ENCODE measurements at regions of chr6 and their contacts with region 1.

Region 1: GRCh38 chr6:28683944-28684538 is 158.4 kb downstream of the GPX5 start:
- DNase-seq: peak in 1 of 2 experiments; percentile 42
- H3K4me3 ChIP-seq: peak overlapping the region; percentile 39; the same call in 1 of the 2 replicates
- H3K27ac ChIP-seq: no peak overlapping the region
- H3K4me1 ChIP-seq: no peaks in the 10 kb centered on the region
- H3K27me3 ChIP-seq: no peaks in the 10 kb centered on the region
- CTCF ChIP-seq: peak; percentile 87

Region 2: DNA sequence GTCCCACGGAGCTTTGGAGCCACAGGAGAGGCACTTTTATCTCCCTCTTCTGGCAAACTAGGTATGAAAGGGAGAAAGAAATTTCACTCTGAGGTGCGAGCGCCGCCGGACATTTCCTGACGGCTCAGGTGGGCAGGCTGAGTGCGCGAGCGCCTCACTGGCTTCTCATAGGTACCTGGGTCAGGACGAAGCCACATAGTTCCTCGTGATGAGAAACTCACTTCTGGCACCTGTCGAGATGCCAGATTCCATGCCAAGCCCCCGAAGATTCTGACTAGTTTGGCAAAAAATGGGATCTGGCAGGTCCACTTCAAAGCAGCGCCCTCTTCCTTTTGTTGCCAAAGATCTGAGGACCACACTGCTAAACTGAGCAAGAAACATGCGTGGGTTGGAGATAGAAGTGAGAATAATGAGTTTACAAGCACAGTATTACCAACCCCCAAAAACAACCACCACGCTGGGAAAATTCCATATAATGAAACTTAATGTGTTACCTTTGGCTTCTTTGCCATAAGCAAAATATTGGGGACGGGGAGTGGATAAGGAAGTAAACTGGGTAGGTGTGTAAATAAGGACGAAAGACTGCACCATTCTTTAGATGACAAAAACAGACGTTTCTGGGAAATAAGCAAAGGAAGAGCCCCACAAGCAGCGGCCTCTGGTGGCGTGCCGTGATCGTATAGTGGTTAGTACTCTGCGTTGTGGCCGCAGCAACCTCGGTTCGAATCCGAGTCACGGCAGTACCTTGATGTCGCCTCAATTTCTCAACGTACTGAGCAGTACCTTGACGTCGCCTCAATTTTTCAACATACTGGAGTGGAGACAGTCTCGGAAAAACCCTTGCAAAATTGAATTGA is 1526.4 kb before region 1 on chr6:
- CTCF ChIA-PET with region 1: no interaction called
- POLR2A ChIA-PET with region 1: no interaction called
- intact Hi-C with region 1: loop called (anchors 10 kb)
- DNase-seq: peak; percentile 68 to 69
- H3K4me3 ChIP-seq: peak overlapping the region; percentile 72
- H3K27ac ChIP-seq: peak overlapping the region; percentile 57
- H3K4me1 ChIP-seq: 0 out of 2 replicates have a peak, but pooled peaks cover 8% of the 10 kb centered on the region
- H3K27me3 ChIP-seq: no peaks in the 10 kb centered on the region
- CTCF ChIP-seq: peak; percentile 39; the same call in 1 of the 2 replicates

Region 3: DNA sequence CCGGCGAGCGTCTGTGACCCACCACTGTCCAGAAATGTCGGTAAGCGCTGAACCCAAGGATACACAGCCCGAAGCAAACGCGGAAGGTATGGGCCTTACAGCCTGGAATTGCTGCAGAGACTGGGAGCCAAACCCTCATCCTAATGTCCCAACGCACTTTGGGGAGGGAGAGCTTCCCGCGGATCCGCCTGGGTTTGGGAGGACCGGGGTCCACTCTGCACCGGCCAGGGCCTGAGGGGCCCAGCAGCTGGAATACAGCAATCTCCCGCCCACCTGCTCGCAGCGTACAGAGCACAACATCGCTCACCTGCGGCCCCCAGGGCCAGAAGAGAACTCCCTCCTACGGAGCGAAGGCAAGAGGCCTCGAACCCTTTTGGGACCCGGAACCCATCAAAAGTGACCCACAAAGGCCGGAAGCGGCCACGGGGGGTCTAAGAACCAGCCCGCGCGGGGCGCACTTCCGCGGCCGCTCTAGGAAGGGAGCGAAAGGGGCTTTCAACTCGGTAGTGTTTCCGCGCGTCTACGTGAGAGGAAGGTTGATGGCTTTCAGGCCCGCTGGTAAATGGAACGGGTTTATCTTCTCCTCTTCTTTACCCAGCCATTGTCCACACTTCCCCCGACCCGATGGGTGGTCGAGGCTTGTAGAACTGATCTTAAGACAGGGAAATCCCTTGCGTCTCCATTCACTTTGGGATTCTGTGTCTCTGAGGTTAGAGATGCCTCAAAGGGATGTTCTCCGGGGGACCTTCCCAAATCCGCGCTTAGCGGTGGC is 284.5 kb before region 1 on chr6 and contains the start of gene ZSCAN12:
- CTCF ChIA-PET with region 1: interaction called, 3 read pairs
- POLR2A ChIA-PET with region 1: no interaction called
- intact Hi-C with region 1: loop called (anchors 2 kb)
- DNase-seq: peak; percentile 75 to 84
- H3K4me3 ChIP-seq: peak within 1 kb of the TSS; percentile 74
- H3K27ac ChIP-seq: peak within 1 kb of the TSS; percentile 43
- H3K4me1 ChIP-seq: peaks cover 30% of the 10 kb centered on the region
- H3K27me3 ChIP-seq: no peaks in the 10 kb centered on the region
- CTCF ChIP-seq: peak; percentile 43
- total RNA-seq, gene ZSCAN12: 10.9 and 11.2 TPM in 2 replicates

Region 4: GRCh38 chr6:28742668-28743270 is 58.7 kb after region 1 on chr6:
- CTCF ChIA-PET with region 1: no interaction called
- POLR2A ChIA-PET with region 1: no interaction called
- intact Hi-C with region 1: no loop called
- DNase-seq: peak; percentile 33 to 76
- H3K4me3 ChIP-seq: peak overlapping the region; percentile 53; the same call in 1 of the 2 replicates
- H3K27ac ChIP-seq: no peak overlapping the region
- H3K4me1 ChIP-seq: peaks cover 11% of the 10 kb centered on the region; the same call in 1 of the 2 replicates
- H3K27me3 ChIP-seq: no peaks in the 10 kb centered on the region
- CTCF ChIP-seq: no peak

Region 5: GRCh38 chr6:28838634-28839442 is 154.8 kb after region 1 on chr6:
- CTCF ChIA-PET with region 1: no interaction called
- POLR2A ChIA-PET with region 1: no interaction called
- intact Hi-C with region 1: loop called (anchors 2 kb)
- DNase-seq: peak; percentile 71 to 83
- H3K4me3 ChIP-seq: peak overlapping the region; percentile 95
- H3K27ac ChIP-seq: peak overlapping the region; percentile 44
- H3K4me1 ChIP-seq: peaks cover 13% of the 10 kb centered on the region
- H3K27me3 ChIP-seq: no peaks in the 10 kb centered on the region
- CTCF ChIP-seq: peak; percentile 74

Region 6: DNA sequence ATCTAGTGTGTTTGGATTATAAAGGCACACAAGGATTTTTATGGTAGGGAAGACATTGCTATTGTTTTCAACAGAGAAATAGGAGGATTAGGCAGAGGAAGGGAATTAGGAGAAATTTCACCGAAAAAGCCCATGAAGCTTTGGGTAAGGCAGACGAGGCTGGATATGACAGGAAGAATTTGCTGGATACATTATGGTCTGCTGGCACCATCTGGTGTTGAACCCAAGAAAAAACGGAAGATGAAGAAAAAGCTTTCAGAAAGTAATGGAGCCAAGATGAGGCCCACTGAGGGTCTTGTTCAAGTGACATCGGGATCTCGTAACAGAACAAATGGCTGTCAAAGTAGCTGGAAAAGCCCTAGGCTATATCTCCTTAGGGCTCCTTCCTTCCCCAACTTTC is 543.2 kb after region 1 on chr6:
- CTCF ChIA-PET with region 1: no interaction called
- POLR2A ChIA-PET with region 1: no interaction called
- intact Hi-C with region 1: loop called (anchors 5 kb)
- DNase-seq: no peak
- H3K4me3 ChIP-seq: no peak overlapping the region
- H3K27ac ChIP-seq: no peak overlapping the region
- H3K4me1 ChIP-seq: no peaks in the 10 kb centered on the region
- H3K27me3 ChIP-seq: peaks cover 4% of the 10 kb centered on the region
- CTCF ChIP-seq: no peak

Measured in PC-9 (cell line).